CD4-positive, alpha-beta T cell (primary cell): ENCODE measurements at regions of chr17 and their contacts with region 1.

Region 1: GRCh38 chr17:47840740-47841603 is at the start of gene SCRN2:
- DNase-seq: peak; percentile 70 to 91 (median 84)
- ATAC-seq: peak; percentile 89
- H3K4me3 ChIP-seq: peak within 1 kb of the TSS; percentile 73
- H3K4me3 Mint-ChIP-seq: peak within 1 kb of the TSS; percentile 94
- H3K27ac ChIP-seq: peak within 1 kb of the TSS in 1 of 2 donors; percentile 47
- H3K27ac Mint-ChIP-seq: peak within 1 kb of the TSS; percentile 41
- H3K4me1 ChIP-seq: peaks cover 38% of the 10 kb centered on the region
- H3K4me1 Mint-ChIP-seq: peaks cover 26% of the 10 kb centered on the region
- H3K27me3 ChIP-seq: peaks cover 18 to 19% of the 10 kb centered on the region in 2 experiments
- H3K27me3 Mint-ChIP-seq: peaks cover 23% of the 10 kb centered on the region
- CTCF ChIP-seq: peak; percentile 93
- total RNA-seq, gene SCRN2: 15.3 to 17.2 TPM

Region 2: GRCh38 chr17:47883589-47884427 is 42.8 kb after region 1 on chr17:
- CTCF ChIA-PET with region 1: interaction called, 86 read pairs
- POLR2A ChIA-PET with region 1: interaction called, 41 read pairs
- intact Hi-C with region 1: no loop called
- DNase-seq: no peak
- ATAC-seq: no peak
- H3K4me3 ChIP-seq: no peak overlapping the region
- H3K4me3 Mint-ChIP-seq: peak overlapping the region; percentile 31
- H3K27ac ChIP-seq: no peak overlapping the region
- H3K27ac Mint-ChIP-seq: no peak overlapping the region
- H3K4me1 ChIP-seq: peaks cover 41% of the 10 kb centered on the region
- H3K4me1 Mint-ChIP-seq: peaks cover 35% of the 10 kb centered on the region
- H3K27me3 ChIP-seq: peaks cover 0 to 2% of the 10 kb centered on the region in 2 experiments
- H3K27me3 Mint-ChIP-seq: peaks cover 5% of the 10 kb centered on the region
- CTCF ChIP-seq: no peak

Region 3: DNA sequence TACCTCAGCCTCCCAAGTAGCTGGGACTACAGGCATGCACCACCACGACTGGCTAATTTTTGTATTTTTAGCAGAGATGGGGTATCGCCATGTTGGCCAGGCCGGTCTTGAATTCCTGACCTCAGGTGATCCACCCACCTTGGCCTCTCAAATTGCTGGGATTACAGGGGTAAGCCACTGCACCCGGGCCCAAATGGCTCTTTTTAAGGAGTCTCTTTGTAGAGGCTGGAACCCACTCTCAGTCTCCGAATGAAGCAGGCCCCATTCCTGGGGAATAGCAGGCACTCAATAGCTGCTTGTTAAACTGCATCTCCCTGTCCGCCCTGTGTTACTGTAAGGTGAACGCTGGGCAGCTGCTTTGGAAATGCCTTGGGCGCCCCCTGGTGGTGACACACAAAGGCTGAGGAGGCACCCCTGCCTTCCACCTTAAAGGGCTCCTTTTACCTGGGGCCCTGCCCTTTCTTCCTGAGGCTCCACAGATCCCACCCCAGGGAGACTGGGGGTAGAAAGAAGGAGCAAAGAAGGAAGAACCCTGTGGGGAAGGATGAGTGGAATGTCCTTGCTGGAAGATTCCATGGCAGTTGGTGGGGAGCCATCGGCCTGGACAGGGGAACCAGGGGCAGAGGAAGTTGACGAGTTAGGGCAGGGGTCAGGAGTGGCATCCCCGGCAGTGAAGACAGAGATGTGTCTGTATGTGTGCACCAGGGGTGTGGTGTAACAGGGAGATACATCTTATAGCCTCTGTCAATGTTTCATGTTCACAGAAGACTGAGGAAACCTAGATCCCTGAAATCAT is 49.0 kb after region 1 on chr17:
- CTCF ChIA-PET with region 1: interaction called, 86 read pairs
- POLR2A ChIA-PET with region 1: interaction called, 46 read pairs
- intact Hi-C with region 1: loop called (anchors 1 kb)
- DNase-seq: peak; percentile 85 to 98 (median 92)
- ATAC-seq: peak; percentile 98
- H3K4me3 ChIP-seq: no peak overlapping the region
- H3K4me3 Mint-ChIP-seq: peak overlapping the region; percentile 72
- H3K27ac ChIP-seq: no peak overlapping the region
- H3K27ac Mint-ChIP-seq: peak overlapping the region; percentile 32
- H3K4me1 ChIP-seq: peaks cover 23% of the 10 kb centered on the region
- H3K4me1 Mint-ChIP-seq: peaks cover 32% of the 10 kb centered on the region
- H3K27me3 ChIP-seq: no peaks in the 10 kb centered on the region
- H3K27me3 Mint-ChIP-seq: no peaks in the 10 kb centered on the region
- CTCF ChIP-seq: peak; percentile 94

Region 4: GRCh38 chr17:47970704-47971463 is 129.9 kb after region 1 on chr17 and contains the start of gene CDK5RAP3:
- CTCF ChIA-PET with region 1: interaction called, 8 read pairs
- POLR2A ChIA-PET with region 1: interaction called, 5 read pairs
- intact Hi-C with region 1: loop called (anchors 2 kb)
- DNase-seq: peak; percentile 95 to 99 (median 98)
- ATAC-seq: peak; percentile 98
- H3K4me3 ChIP-seq: peak within 1 kb of the TSS; percentile 99
- H3K4me3 Mint-ChIP-seq: peak within 1 kb of the TSS; percentile 99
- H3K27ac ChIP-seq: peak within 1 kb of the TSS; percentile 32 to 72
- H3K27ac Mint-ChIP-seq: peak within 1 kb of the TSS; percentile 86
- H3K4me1 ChIP-seq: peaks cover 26% of the 10 kb centered on the region
- H3K4me1 Mint-ChIP-seq: peaks cover 26% of the 10 kb centered on the region
- H3K27me3 ChIP-seq: no peaks in the 10 kb centered on the region
- H3K27me3 Mint-ChIP-seq: no peaks in the 10 kb centered on the region
- CTCF ChIP-seq: peak; percentile 92
- total RNA-seq, gene CDK5RAP3: 206 to 224 TPM

Region 5: GRCh38 chr17:48011405-48012150 is 170.6 kb after region 1 on chr17:
- CTCF ChIA-PET with region 1: no interaction called
- POLR2A ChIA-PET with region 1: no interaction called
- intact Hi-C with region 1: loop called in 1 of 2 experiments (anchors 5 kb)
- DNase-seq: peak in 11 of 14 experiments; percentile 18 to 68 (median 39)
- ATAC-seq: peak; percentile 76
- H3K4me3 ChIP-seq: peak overlapping the region; percentile 43
- H3K4me3 Mint-ChIP-seq: peak overlapping the region; percentile 71
- H3K27ac ChIP-seq: no peak overlapping the region
- H3K27ac Mint-ChIP-seq: no peak overlapping the region
- H3K4me1 ChIP-seq: peaks cover 14% of the 10 kb centered on the region
- H3K4me1 Mint-ChIP-seq: peaks cover 16% of the 10 kb centered on the region
- H3K27me3 ChIP-seq: peaks cover 32 to 46% of the 10 kb centered on the region in 2 experiments
- H3K27me3 Mint-ChIP-seq: peaks cover 66% of the 10 kb centered on the region
- CTCF ChIP-seq: peak; percentile 46